GM10248 (cell line): ENCODE measurements at regions of chr10 and their contacts with region 1.

Region 1: DNA sequence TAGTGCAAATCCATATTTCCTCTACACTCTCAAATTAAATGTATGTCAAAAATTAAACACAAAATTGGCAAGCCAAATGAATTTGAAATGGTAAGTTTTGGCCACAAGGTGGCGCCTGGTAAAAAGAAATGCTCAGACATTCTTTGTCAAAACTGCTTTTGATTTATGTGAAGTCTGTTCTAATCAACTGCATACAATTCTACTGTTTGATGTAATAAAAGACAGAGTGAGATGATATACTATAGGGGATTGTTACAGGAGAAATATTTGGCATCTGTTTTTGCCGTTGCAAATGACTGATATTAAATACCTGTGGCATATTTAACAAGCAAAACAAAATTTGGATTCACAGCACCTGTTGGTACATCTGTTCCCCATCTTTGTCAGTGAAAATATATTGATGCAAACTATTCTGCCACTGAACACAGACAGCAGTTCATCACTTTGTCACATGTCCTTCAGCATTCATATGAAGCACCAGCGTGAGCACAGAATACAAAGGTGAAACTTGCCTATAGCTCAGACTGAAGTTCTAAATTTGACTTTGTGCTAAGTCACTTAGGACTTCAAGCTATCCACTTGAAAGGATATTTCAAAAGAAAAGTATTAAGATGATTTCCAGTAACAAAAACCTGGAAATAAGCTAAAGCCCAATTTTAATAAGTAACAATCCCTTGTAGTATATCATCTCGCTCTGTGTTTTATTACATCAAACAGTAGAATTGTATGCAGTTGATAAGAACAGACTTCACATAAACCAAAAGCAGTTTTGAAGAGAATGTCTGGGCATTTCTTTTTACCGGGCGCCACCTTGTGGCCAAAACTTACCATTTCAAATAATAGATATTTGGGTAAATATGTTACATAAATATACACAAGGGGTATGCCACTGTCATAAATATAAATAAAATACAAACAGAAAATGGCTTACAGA is 10.2 kb upstream of the CH25H start:
- DNase-seq: peak; percentile 42
- CTCF ChIP-seq: peak; percentile 61

Region 2: GRCh38 chr10:88944813-88945212 is 272.5 kb before region 1 on chr10:
- CTCF ChIA-PET with region 1: interaction called, 15 read pairs
- POLR2A ChIA-PET with region 1: no interaction called
- DNase-seq: peak; percentile 35
- CTCF ChIP-seq: no peak

Region 3: DNA sequence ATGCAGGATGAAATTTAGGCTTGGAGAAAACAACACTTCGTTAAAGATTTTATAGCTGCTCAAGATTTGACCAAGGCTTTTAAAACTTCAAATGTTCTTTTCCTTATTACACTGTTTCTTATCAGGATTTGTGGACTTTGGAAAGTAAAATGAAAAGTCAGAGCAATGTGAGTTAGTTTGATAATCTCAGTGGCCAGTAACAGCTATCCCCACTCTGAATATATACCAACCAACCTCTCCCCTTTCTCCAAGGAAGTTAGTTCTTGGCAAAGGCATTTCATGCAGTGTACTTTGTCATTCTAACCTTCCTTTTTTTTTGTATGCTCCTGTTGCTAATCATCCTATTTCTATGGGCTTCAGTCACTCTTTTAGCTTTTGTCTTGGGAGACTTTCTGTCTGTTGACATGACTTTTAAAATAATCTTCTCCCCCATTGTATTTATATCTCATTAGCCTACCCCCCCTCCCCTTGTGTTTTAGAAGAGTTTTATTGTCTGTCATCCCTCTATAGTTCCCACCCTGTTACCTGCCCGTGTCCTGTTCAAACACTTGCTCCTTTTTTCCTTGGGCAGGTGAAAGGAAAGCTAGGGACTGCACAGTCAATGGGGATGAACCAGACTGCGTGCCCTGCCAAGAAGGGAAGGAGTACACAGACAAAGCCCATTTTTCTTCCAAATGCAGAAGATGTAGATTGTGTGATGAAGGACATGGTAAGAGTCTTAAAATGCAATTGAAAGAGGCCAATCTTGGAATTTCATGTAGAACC is 210.0 kb before region 1 on chr10:
- CTCF ChIA-PET with region 1: interaction called, 10 read pairs
- POLR2A ChIA-PET with region 1: no interaction called
- DNase-seq: no peak
- CTCF ChIP-seq: no peak

Region 4: GRCh38 chr10:89029785-89030437 is 187.4 kb before region 1 on chr10:
- CTCF ChIA-PET with region 1: interaction called, 67 read pairs
- POLR2A ChIA-PET with region 1: no interaction called
- DNase-seq: peak; percentile 39
- CTCF ChIP-seq: peak; percentile 70

Region 5: DNA sequence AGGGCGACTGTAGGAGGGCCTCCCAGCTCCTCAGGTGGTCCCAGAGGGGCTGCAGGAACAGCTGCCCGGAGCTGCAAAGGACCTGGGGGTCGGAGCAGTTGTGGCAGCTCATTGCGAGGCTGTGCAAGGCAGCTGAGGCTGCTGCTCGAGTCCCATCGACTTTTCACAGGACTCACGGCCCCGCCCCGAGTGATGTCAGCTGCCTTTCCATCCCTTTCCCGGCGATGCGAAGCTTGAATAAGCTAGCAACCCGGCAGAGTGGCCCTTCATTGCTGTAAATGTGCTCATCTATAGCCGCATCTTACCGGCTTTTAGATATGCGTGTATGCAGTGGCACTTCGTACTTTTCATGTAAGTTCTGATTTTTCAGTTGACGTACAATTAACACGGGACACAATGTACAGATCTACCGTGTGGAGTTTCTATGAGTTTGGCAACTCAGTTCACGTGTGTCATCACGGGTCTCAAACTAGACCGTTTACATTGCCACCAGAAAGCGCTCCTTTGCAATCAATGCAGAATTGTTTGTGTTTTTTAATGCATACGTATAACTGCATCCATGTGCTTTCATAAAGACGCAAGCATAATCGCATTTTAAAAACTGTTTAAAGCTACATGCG is 10.0 kb before region 1 on chr10 and contains the start of gene CH25H:
- CTCF ChIA-PET with region 1: interaction called, 33 read pairs
- POLR2A ChIA-PET with region 1: no interaction called
- DNase-seq: peak; percentile 36
- CTCF ChIP-seq: no peak

Region 6: GRCh38 chr10:89241486-89242344 is 24.4 kb after region 1 on chr10:
- CTCF ChIA-PET with region 1: interaction called, 54 read pairs
- POLR2A ChIA-PET with region 1: no interaction called
- DNase-seq: no peak
- CTCF ChIP-seq: no peak